Activated CD8-positive, alpha-beta memory T cell treated with anti-CD3 and anti-CD28 coated beads, Interleukin-2, amount 10 ng/mL, durations not matched to agents 7 days and 5 days (primary cell): ENCODE measurements at regions of chr1 and their contacts with region 1.

Region 1: DNA sequence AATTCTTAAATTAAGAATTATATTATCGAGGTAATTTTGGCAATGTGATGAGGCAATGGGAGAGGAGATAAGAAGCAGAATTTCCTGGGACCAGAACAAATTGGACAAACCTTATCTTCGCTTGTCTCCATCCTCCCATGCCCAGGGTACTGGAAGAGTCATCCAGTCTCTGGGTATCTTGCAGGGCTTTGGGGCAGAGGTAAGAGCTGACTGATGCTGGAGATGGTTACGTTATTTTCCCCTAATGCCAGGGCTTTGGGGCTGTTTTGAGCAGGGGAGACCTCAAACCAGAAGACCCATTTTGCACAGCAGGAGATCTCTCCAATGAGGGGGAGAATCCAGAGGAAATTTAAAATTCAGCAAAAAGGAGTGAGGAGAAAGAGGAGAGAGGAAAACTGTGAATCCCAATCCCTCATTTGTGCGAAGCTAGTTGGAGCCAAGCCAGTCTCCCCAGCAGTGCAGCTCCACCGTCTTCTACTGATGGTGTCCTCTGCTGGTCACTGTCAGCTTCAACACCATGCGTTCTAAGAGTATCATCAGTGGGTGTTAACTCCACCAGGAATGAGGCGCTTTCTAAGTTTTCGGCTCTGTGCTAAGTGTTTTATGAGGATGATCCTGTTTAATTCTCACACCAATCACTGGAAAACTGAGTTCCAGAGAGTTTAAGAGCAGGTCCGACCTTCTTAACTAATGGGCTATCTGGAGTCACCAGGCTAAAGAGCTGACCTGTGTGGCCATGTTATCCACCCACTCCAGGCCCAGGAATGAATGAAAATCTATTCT is 86.8 kb upstream of the CD34 start:
- DNase-seq: peak; percentile 63
- ATAC-seq: peak; percentile 85
- H3K4me3 Mint-ChIP-seq: no peak overlapping the region
- H3K27ac Mint-ChIP-seq: no peak overlapping the region
- H3K4me1 Mint-ChIP-seq: no peaks in the 10 kb centered on the region
- H3K27me3 Mint-ChIP-seq: peaks cover 16% of the 10 kb centered on the region

Region 2: GRCh38 chr1:208007938-208008342 is 10.3 kb after region 1 on chr1:
- CTCF ChIA-PET with region 1: interaction called, 16 read pairs
- DNase-seq: no peak
- ATAC-seq: no peak
- H3K4me3 Mint-ChIP-seq: no peak overlapping the region
- H3K27ac Mint-ChIP-seq: no peak overlapping the region
- H3K4me1 Mint-ChIP-seq: no peaks in the 10 kb centered on the region
- H3K27me3 Mint-ChIP-seq: peaks cover 2% of the 10 kb centered on the region

Region 3: DNA sequence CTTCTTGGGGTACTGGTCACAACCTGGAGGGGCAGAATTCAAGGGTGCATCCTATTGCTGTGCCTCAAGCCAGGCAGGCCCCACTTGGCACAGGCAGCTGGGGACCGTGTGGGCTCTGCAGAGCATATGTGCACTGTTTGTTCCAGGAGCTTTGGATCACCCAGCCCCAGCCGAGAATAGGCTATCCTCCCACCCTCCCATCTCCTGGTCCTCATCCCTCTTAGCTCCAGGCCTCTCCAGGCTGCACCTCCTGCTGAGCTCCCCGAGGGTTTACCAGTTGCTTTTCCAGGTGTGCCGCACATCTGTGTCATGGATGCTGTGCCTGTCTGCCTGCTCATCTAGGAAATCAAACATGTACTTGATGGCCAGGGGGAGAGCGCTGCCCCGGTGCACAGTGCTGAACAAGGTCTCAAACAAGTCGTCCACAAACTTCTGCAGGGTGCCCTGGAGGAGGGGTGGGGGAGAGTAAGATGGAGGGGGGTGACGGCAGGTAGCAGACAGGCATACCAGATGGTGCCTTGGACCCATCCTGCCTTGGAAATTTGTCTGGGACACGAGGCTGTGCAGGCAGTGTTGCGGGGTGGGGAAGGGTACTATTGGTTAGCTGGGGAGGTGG is 33.7 kb after region 1 on chr1:
- CTCF ChIA-PET with region 1: no interaction called
- DNase-seq: no peak
- ATAC-seq: no peak
- H3K4me3 Mint-ChIP-seq: no peak overlapping the region
- H3K27ac Mint-ChIP-seq: no peak overlapping the region
- H3K4me1 Mint-ChIP-seq: no peaks in the 10 kb centered on the region
- H3K27me3 Mint-ChIP-seq: peaks cover 10% of the 10 kb centered on the region